Activated T-helper 2 cell treated with anti-CD3 and anti-CD28 coated beads, Interferon-gamma antibody, Interleukin-2, Interleukin-4, amounts not matched to agents 10 μg/mL and 5 μg/mL and 100 μg/mL, durations not matched to agents 14 hours and 24 hours and 36 hours (primary cell): ENCODE measurements at regions of chr11 and their contacts with region 1.

Region 1: DNA sequence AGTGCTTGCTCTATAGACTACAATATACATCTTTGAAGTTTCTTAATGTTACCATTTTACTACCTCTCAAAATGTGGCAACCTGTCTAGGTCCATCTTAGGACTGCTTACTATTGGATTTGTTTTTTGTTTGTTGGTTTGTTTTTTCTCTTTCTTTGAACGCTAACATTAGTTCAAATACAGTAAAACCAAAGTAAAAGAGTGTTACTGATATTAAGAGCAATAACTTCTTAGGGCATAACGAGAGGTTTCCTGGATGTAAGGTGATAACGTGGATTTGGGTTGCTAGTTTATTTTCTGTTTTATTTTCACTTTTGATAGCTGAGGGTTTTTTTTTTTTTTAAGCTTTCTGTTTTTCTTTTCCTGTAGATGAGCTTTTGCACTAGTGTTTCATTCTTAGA is 43.6 kb downstream of the TMEM135 start:
- DNase-seq: no peak
- H3K4me3 Mint-ChIP-seq: peak overlapping the region; percentile 75
- H3K27ac Mint-ChIP-seq: peak overlapping the region; percentile 91
- H3K4me1 Mint-ChIP-seq: peaks cover 29% of the 10 kb centered on the region
- H3K27me3 Mint-ChIP-seq: no peaks in the 10 kb centered on the region

Region 2: GRCh38 chr11:87203907-87204602 is 122.7 kb after region 1 on chr11:
- intact Hi-C with region 1: no loop called
- DNase-seq: no peak
- H3K4me3 Mint-ChIP-seq: no peak overlapping the region
- H3K27ac Mint-ChIP-seq: no peak overlapping the region
- H3K4me1 Mint-ChIP-seq: no peaks in the 10 kb centered on the region
- H3K27me3 Mint-ChIP-seq: no peaks in the 10 kb centered on the region

Region 3: GRCh38 chr11:87252869-87253268 is 171.5 kb after region 1 on chr11:
- intact Hi-C with region 1: loop called (anchors 10 kb)
- DNase-seq: no peak
- H3K4me3 Mint-ChIP-seq: no peak overlapping the region
- H3K27ac Mint-ChIP-seq: peak overlapping the region; percentile 12
- H3K4me1 Mint-ChIP-seq: peaks cover 23% of the 10 kb centered on the region
- H3K27me3 Mint-ChIP-seq: no peaks in the 10 kb centered on the region